CD8-positive, alpha-beta T cell (primary cell): ENCODE measurements at regions of chr11 and their contacts with region 1.

Region 1: GRCh38 chr11:62645956-62646824 is at the start of gene GANAB:
- DNase-seq: peak; percentile 96 to 99 (median 99)
- ATAC-seq: peak; percentile 98
- H3K4me3 ChIP-seq: peak within 1 kb of the TSS; percentile 81 to 98
- H3K4me3 Mint-ChIP-seq: peak within 1 kb of the TSS; percentile 98
- H3K27ac ChIP-seq: peak within 1 kb of the TSS; percentile 90 to 98
- H3K27ac Mint-ChIP-seq: peak within 1 kb of the TSS; percentile 98
- H3K4me1 ChIP-seq: peaks cover 27% of the 10 kb centered on the region
- H3K4me1 Mint-ChIP-seq: peaks cover 37% of the 10 kb centered on the region
- H3K27me3 ChIP-seq: no peaks in the 10 kb centered on the region
- H3K27me3 Mint-ChIP-seq: no peaks in the 10 kb centered on the region
- CTCF ChIP-seq: no peak
- total RNA-seq, gene GANAB: 177 to 184 TPM

Region 2: DNA sequence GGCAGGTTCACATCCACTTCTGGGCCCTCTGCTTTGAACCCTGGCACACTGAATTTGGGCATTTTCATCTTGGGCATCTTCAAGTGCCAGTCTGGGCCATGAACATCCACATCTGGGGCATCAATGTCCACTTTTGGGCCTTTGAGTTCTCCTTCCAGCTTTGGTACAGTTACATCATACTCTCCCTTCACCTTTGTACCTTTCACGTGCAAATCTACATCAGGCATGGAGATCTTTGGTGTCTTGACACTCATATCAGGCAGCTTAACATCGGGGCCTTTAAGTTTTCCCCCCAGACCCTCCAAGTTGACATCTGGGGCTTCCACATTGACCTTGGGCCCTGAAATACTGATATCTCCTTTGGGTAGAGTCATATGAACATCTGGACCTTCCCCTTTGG is 114.1 kb before region 1 on chr11:
- CTCF ChIA-PET with region 1: no interaction called
- POLR2A ChIA-PET with region 1: no interaction called
- intact Hi-C with region 1: no loop called
- DNase-seq: no peak
- ATAC-seq: no peak
- H3K4me3 ChIP-seq: no peak overlapping the region
- H3K4me3 Mint-ChIP-seq: no peak overlapping the region
- H3K27ac ChIP-seq: no peak overlapping the region
- H3K27ac Mint-ChIP-seq: no peak overlapping the region
- H3K4me1 ChIP-seq: no peaks in the 10 kb centered on the region
- H3K4me1 Mint-ChIP-seq: no peaks in the 10 kb centered on the region
- H3K27me3 ChIP-seq: no peaks in the 10 kb centered on the region
- H3K27me3 Mint-ChIP-seq: no peaks in the 10 kb centered on the region
- CTCF ChIP-seq: no peak

Region 3: DNA sequence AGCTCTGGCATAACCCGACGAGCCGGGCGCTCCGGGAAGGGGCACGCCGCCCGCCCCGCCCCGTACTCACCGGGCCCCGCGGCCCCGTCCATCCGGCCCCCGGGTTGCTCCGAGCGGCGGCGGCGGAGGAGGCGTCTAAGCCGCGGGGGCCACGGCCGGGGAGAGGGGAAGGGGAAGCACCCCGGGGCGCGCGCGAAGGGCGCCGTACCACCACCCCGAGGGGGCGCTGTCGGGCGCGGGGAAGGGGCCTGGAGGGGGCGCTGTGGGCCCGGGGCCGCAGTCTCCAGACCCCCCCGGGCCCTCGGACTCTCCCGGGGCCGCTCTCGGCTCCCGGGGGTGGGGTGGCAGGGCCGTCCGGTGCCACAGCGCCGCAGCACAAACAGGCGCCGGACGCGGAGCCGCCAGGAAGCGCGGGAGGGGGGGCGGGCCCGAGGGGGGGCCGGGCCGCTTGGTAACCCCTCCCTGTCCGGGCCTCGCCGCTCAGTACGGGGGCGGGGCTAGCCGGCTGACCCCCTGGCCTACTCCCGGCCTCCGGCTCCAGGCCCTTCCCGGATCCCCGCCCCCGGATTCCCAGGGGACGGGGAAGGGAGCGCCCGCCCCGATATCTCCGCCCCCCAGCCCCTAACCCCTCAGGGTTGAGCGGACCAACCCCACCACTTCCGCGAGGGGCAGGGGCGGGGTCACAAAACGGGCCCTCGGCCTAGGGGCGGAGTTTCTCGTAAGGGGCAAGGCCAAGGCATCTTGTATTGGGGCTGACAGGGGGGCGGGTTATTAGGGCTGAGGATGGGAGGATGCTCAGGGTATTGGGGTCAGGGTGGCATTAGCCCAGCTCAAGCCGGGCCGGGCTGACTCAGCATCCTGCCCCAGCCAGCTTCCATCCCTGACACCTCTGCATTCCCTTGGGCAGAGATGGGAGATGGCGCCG is 33.6 kb before region 1 on chr11 and contains the starts of genes EML3 and ROM1:
- CTCF ChIA-PET with region 1: interaction called, 6 read pairs
- POLR2A ChIA-PET with region 1: interaction called, 5 read pairs
- intact Hi-C with region 1: loop called in 1 of 2 experiments (anchors 2 kb)
- DNase-seq: peak; percentile 79 to 95 (median 88)
- ATAC-seq: peak; percentile 72
- H3K4me3 ChIP-seq: peak within 1 kb of the TSS; percentile 67 to 97
- H3K4me3 Mint-ChIP-seq: peak within 1 kb of the TSS; percentile 95
- H3K27ac ChIP-seq: peak within 1 kb of the TSS; percentile 91
- H3K27ac Mint-ChIP-seq: peak within 1 kb of the TSS; percentile 99
- H3K4me1 ChIP-seq: peaks cover 38% of the 10 kb centered on the region
- H3K4me1 Mint-ChIP-seq: peaks cover 54% of the 10 kb centered on the region
- H3K27me3 ChIP-seq: no peaks in the 10 kb centered on the region
- H3K27me3 Mint-ChIP-seq: no peaks in the 10 kb centered on the region
- CTCF ChIP-seq: peak; percentile 99
- total RNA-seq, gene EML3: 167 to 189 TPM
- total RNA-seq, gene ROM1: 1.7 to 2.1 TPM

Region 4: DNA sequence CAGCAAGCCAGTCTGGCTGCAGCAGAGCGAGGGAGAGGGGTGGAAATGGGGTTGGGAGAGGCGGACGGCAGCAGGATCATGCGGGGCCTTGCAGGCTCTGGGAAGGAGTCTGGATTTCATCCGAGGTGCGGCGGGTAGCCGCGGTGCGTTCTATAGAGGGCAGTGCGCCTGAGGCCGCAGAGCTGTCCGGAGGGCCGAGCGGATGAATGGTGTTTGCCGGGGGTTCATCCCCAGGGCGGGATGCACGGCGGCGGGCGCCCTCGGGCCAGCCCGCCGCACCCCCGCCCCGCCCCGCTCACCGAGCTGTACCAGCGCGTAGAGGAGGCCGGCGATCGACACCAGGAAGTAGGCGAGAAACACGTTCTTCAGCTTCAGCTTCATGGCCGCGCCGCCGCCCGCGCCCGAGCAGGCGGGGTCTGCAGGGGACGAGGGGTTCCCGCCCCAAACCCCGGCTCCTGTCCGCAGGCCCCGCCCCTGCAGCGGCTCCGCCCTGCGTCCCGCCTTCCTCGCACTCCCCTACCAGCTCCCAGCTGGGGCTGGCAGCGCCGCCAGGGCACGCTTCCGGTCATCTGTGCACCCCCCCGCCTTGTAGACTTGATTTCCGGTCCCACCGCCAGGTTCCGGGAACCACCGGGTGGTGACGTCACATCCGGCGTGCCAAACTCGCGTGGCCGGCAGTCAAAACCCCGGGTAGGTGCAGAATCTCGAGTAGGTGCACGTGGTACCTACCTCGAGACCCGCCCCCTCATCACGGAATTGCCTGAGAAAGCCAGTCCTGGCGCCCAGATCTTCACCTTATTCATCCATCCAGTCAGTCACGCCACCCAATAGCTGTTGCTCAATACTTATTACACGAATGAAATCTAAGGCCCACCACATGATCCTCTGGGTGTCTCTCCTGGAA is 24.4 kb before region 1 on chr11 and contains the start of gene B3GAT3:
- CTCF ChIA-PET with region 1: interaction called, 6 read pairs
- POLR2A ChIA-PET with region 1: interaction called, 28 read pairs
- intact Hi-C with region 1: loop called (anchors 1 kb)
- DNase-seq: peak; percentile 90 to 99 (median 97)
- ATAC-seq: peak; percentile 81
- H3K4me3 ChIP-seq: peak within 1 kb of the TSS; percentile 69 to 80
- H3K4me3 Mint-ChIP-seq: peak within 1 kb of the TSS; percentile 98
- H3K27ac ChIP-seq: peak within 1 kb of the TSS; percentile 78 to 88
- H3K27ac Mint-ChIP-seq: peak within 1 kb of the TSS; percentile 97
- H3K4me1 ChIP-seq: peaks cover 20% of the 10 kb centered on the region
- H3K4me1 Mint-ChIP-seq: peaks cover 30% of the 10 kb centered on the region
- H3K27me3 ChIP-seq: no peaks in the 10 kb centered on the region
- H3K27me3 Mint-ChIP-seq: no peaks in the 10 kb centered on the region
- CTCF ChIP-seq: no peak
- total RNA-seq, gene B3GAT3: 41.7 to 44.0 TPM